ENCODE measurements at regions of chr17 and their contacts with region 1.

Region 1: DNA sequence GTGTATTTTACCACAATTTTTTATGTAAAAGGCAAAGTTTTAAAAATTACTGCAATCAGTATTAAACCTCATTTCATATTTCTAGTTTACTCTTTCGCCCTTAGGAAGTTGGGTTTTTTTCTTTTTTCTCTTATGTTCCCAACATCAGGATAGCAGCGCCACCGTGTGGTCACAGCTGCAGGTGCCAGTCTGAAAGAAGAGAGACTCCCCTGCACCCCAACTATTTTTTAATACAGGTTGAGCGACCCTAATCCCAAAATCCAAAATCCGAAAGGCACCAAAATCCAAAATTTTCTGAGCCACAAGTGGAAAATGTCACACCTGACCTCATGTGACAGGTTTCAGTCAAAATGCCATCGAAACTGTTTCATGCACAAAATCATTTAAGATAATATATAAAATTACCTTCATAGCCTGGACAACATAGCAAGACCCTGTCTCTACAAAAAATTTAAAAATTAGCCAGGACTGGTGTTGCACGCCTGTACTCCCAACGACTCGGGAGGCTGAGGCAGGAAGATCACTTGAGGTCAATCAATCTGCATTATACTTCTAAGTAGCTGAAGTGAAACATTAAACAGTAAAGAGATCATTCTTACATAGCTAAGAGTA is 21.8 kb upstream of the ASGR2 start:
- DNase-seq: peak; percentile 65 to 78 (median 70)
- H3K4me3 ChIP-seq: no peak overlapping the region
- H3K4me3 Mint-ChIP-seq: peak overlapping the region in 1 of 8 donors; percentile 53
- H3K27ac ChIP-seq: no peak overlapping the region
- H3K27ac Mint-ChIP-seq: peak overlapping the region in 4 of 7 donors; percentile 0 to 68 (median 36)
- H3K4me1 ChIP-seq: peaks cover 22% of the 10 kb centered on the region
- H3K4me1 Mint-ChIP-seq: peaks cover 14 to 25% (median 21%) of the 10 kb centered on the region in 4 donors
- H3K27me3 ChIP-seq: no peaks in the 10 kb centered on the region
- H3K27me3 Mint-ChIP-seq: peaks cover 5 to 11% of the 10 kb centered on the region in 2 donors

Region 2: GRCh38 chr17:6913608-6914443 is 222.5 kb before region 1 on chr17:
- CTCF ChIA-PET with region 1: interaction called, 7 read pairs
- POLR2A ChIA-PET with region 1: no interaction called
- intact Hi-C with region 1: loop called (anchors 1 kb)
- DNase-seq: peak; percentile 58 to 68 (median 65)
- H3K4me3 ChIP-seq: peak overlapping the region in 1 of 2 donors; percentile 27
- H3K4me3 Mint-ChIP-seq: peak overlapping the region; percentile 66 to 89 (median 85)
- H3K27ac ChIP-seq: no peak overlapping the region
- H3K27ac Mint-ChIP-seq: peak overlapping the region in 3 of 7 donors; percentile 14 to 82 (median 79)
- H3K4me1 ChIP-seq: peaks cover 7% of the 10 kb centered on the region
- H3K4me1 Mint-ChIP-seq: peaks cover 8 to 24% (median 17%) of the 10 kb centered on the region in 4 donors
- H3K27me3 ChIP-seq: no peaks in the 10 kb centered on the region
- H3K27me3 Mint-ChIP-seq: peaks cover 13 to 22% of the 10 kb centered on the region in 2 donors

Region 3: GRCh38 chr17:7035591-7036368 is 100.6 kb before region 1 on chr17 and contains the start of gene SLC16A13:
- CTCF ChIA-PET with region 1: interaction called, 430 read pairs
- POLR2A ChIA-PET with region 1: interaction called, 12 read pairs
- intact Hi-C with region 1: no loop called
- DNase-seq: peak; percentile 97 to 100 (median 98)
- H3K4me3 ChIP-seq: peak within 1 kb of the TSS; percentile 32 to 81
- H3K4me3 Mint-ChIP-seq: peak within 1 kb of the TSS; percentile 90 to 96 (median 94)
- H3K27ac ChIP-seq: peak within 1 kb of the TSS; percentile 87
- H3K27ac Mint-ChIP-seq: peak within 1 kb of the TSS; percentile 97 to 99 (median 98)
- H3K4me1 ChIP-seq: peaks cover 65% of the 10 kb centered on the region
- H3K4me1 Mint-ChIP-seq: peaks cover 25 to 81% (median 49%) of the 10 kb centered on the region in 4 donors
- H3K27me3 ChIP-seq: no peaks in the 10 kb centered on the region
- H3K27me3 Mint-ChIP-seq: no peaks in the 10 kb centered on the region
- total RNA-seq, gene SLC16A13: 13.1 to 13.7 TPM

Region 4: DNA sequence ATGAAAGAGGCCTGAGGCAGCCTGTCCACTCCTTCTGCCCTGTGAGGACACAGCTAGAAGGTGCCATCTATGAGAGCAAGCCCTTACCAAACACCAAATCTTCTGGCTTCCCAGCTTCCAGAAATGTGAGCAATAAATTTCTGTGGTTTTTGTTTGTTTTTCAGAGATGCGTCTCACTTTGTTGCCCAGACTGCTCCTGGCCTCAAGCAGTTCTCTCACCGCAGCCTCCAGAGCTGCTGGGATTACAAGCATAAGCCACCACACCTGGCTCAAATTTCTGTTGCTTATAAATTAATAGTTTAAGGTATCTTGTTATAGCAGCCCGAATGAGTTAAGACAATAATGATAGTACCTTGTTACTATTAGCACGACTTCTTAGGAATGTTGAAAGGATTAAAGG is 80.0 kb before region 1 on chr17:
- CTCF ChIA-PET with region 1: interaction called, 430 read pairs
- POLR2A ChIA-PET with region 1: interaction called, 16 read pairs
- intact Hi-C with region 1: loop called (anchors 1 kb)
- DNase-seq: no peak
- H3K4me3 ChIP-seq: no peak overlapping the region
- H3K4me3 Mint-ChIP-seq: no peak overlapping the region
- H3K27ac ChIP-seq: no peak overlapping the region
- H3K27ac Mint-ChIP-seq: no peak overlapping the region
- H3K4me1 ChIP-seq: no peaks in the 10 kb centered on the region
- H3K4me1 Mint-ChIP-seq: peaks cover 1 to 5% (median 3%) of the 10 kb centered on the region in 4 donors
- H3K27me3 ChIP-seq: no peaks in the 10 kb centered on the region
- H3K27me3 Mint-ChIP-seq: peaks cover 0 to 2% of the 10 kb centered on the region in 2 donors

Region 5: GRCh38 chr17:7109461-7110322 is 26.7 kb before region 1 on chr17:
- CTCF ChIA-PET with region 1: no interaction called
- POLR2A ChIA-PET with region 1: no interaction called
- intact Hi-C with region 1: no loop called
- DNase-seq: no peak
- H3K4me3 ChIP-seq: no peak overlapping the region
- H3K4me3 Mint-ChIP-seq: peak overlapping the region in 1 of 8 donors; percentile 12
- H3K27ac ChIP-seq: no peak overlapping the region
- H3K27ac Mint-ChIP-seq: peak overlapping the region in 1 of 7 donors; percentile 53
- H3K4me1 ChIP-seq: peaks cover 6% of the 10 kb centered on the region
- H3K4me1 Mint-ChIP-seq: peaks cover 7 to 18% (median 8%) of the 10 kb centered on the region in 4 donors
- H3K27me3 ChIP-seq: no peaks in the 10 kb centered on the region
- H3K27me3 Mint-ChIP-seq: peaks cover 4 to 8% of the 10 kb centered on the region in 2 donors

Region 6: DNA sequence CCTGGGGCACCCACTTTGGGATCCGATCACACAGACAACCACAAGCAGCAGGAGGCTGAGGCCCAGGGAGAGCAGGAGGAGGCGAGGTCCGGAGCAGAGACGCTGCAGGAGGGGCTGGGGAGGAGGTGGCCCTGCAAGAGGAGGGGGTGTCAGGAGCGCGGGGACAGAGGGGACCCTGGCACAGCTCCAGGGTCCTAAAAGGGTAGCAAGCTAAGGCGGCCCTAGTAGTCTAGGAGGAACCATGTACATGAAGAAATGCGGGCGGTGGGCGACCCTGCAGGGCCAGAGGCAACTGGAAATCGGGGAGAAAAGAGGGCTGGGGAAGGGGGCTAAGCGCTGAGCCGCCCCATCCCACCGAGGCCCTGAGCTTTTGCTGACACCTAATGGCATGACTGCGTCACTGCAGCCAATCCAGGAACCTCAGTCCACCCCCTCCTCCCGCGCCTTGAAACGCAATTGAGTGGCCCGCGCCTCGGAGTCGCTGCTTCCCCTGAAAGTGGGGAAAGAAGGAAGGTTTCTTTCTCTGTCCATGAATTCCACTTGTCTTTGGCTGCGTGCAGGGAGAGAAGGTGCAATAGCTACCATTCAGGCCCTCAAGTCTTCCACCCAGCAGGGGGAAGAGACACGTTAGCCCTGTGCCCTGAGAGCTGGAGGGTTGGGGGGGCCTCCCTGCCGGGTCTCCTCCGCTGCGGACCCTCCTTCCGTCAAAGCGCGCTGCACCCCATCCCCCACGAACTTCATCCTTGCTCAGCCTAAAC is 41.0 kb after region 1 on chr17:
- CTCF ChIA-PET with region 1: interaction called, 12 read pairs
- POLR2A ChIA-PET with region 1: no interaction called
- intact Hi-C with region 1: no loop called
- DNase-seq: peak; percentile 57 to 67 (median 60)
- H3K4me3 ChIP-seq: no peak overlapping the region
- H3K4me3 Mint-ChIP-seq: peak overlapping the region; percentile 66 to 78 (median 68)
- H3K27ac ChIP-seq: no peak overlapping the region
- H3K27ac Mint-ChIP-seq: peak overlapping the region in 4 of 7 donors; percentile 32 to 84 (median 48)
- H3K4me1 ChIP-seq: peaks cover 25% of the 10 kb centered on the region
- H3K4me1 Mint-ChIP-seq: peaks cover 7 to 12% (median 8%) of the 10 kb centered on the region in 4 donors
- H3K27me3 ChIP-seq: peaks cover 18% of the 10 kb centered on the region
- H3K27me3 Mint-ChIP-seq: peaks cover 8 to 11% of the 10 kb centered on the region in 2 donors

Region 7: GRCh38 chr17:7296189-7296902 is 160.0 kb after region 1 on chr17:
- CTCF ChIA-PET with region 1: interaction called, 6 read pairs
- POLR2A ChIA-PET with region 1: no interaction called
- intact Hi-C with region 1: loop called (anchors 10 kb)
- DNase-seq: peak; percentile 41 to 62 (median 51)
- H3K4me3 ChIP-seq: no peak overlapping the region
- H3K4me3 Mint-ChIP-seq: peak overlapping the region in 6 of 8 donors; percentile 8 to 86 (median 50)
- H3K27ac ChIP-seq: no peak overlapping the region
- H3K27ac Mint-ChIP-seq: peak overlapping the region in 3 of 7 donors; percentile 55 to 60 (median 59)
- H3K4me1 ChIP-seq: peaks cover 26% of the 10 kb centered on the region
- H3K4me1 Mint-ChIP-seq: peaks cover 7 to 31% (median 18%) of the 10 kb centered on the region in 4 donors
- H3K27me3 ChIP-seq: no peaks in the 10 kb centered on the region
- H3K27me3 Mint-ChIP-seq: peaks cover 2 to 19% of the 10 kb centered on the region in 2 donors

Measured in CD4-positive, alpha-beta memory T cell (primary cell).